ENCODE measurements at regions of chr16 and their contacts with region 1.

Region 1: DNA sequence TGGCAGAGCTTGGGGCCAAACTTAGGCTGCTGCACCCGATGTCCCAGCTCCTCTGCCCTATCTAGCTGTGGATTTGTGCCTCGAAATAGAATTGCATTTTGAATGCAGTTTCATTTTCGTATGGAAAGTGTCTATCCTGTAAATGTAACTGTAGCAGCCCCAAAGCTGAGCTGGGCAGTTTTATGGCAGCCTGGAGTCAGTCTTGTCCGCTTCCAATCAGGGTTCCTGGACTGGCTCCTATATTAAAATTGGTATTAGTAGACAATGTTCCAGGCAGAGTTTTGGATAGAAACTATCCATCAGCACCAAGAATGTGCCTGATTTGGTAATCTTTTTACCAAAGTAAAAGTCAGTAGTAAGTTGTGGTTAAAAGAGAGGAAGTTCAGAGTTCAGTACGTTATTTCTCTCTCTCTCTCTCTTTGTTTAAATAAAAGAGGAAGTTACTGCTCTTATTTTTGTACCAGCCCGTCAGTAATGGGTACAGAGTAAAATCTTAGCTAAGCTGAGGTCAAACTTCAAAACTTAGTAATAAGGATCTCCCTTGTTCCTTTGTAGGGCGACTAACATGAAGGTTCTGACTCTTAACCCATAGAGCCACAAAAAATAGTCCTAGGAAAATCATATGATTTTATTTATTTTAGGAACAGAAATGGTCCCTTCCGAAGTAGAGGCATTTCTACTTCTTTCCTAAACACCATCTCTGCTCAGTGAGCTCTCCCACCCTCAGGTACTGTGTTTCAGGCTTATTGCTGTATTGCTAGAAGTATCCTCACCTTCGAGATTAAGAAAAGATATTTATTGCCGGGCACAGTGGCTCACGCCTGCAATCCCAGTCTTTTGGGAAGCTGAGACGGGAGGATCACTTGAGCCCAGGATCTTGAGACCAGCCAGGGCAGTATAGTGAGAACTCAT is 28.0 kb downstream of the PRKCB start:
- DNase-seq: peak; percentile 82
- ATAC-seq: peak; percentile 80
- H3K4me3 ChIP-seq: peak overlapping the region; percentile 28 to 68 (median 55)
- H3K4me3 Mint-ChIP-seq: peak overlapping the region; percentile 89
- H3K27ac ChIP-seq: peak overlapping the region; percentile 54 to 76
- H3K27ac Mint-ChIP-seq: peak overlapping the region; percentile 92
- H3K4me1 ChIP-seq: peaks cover 92 to 94% of the 10 kb centered on the region in 2 donors
- H3K4me1 Mint-ChIP-seq: peaks cover 93% of the 10 kb centered on the region
- H3K27me3 ChIP-seq: no peaks in the 10 kb centered on the region
- H3K27me3 Mint-ChIP-seq: no peaks in the 10 kb centered on the region
- CTCF ChIP-seq: no peak

Region 2: GRCh38 chr16:23753908-23754593 is 109.7 kb before region 1 on chr16:
- CTCF ChIA-PET with region 1: no interaction called
- POLR2A ChIA-PET with region 1: no interaction called
- intact Hi-C with region 1: no loop called
- DNase-seq: no peak
- ATAC-seq: no peak
- H3K4me3 ChIP-seq: peak overlapping the region in 2 of 5 experiments; percentile 32 to 57
- H3K4me3 Mint-ChIP-seq: peak overlapping the region; percentile 34
- H3K27ac ChIP-seq: no peak overlapping the region
- H3K27ac Mint-ChIP-seq: no peak overlapping the region
- H3K4me1 ChIP-seq: peaks cover 12 to 16% of the 10 kb centered on the region in 2 donors
- H3K4me1 Mint-ChIP-seq: peaks cover 3% of the 10 kb centered on the region
- H3K27me3 ChIP-seq: peaks cover 0 to 56% (median 26%) of the 10 kb centered on the region in 4 experiments
- H3K27me3 Mint-ChIP-seq: peaks cover 58% of the 10 kb centered on the region
- CTCF ChIP-seq: no peak

Region 3: DNA sequence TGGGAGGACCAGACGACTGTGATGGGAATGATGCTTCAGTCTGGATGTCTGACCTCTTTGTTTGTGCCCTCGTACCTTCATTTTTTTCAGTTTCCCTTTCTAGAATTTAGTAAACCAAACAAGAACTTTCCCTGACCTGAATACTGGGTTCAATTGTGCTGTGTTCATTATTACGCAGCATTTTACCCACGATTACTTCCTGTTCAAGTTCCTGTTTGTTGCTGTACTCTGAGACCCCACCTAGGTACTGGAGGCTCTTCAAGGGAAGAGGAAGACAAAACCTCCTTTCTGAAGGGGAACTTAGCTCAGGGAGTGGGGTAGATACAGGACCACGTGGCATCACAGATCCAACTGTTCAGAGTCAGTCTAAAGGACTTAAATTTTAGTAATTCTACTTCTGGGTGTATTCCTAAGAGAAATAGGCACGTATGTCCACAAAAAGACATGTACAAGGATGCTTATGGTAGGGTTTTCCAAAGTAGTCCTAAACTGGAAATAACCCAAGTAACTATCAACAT is 37.2 kb before region 1 on chr16:
- CTCF ChIA-PET with region 1: interaction called, 3 read pairs
- POLR2A ChIA-PET with region 1: no interaction called
- intact Hi-C with region 1: loop called (anchors 1 kb)
- DNase-seq: peak; percentile 84
- ATAC-seq: peak; percentile 91
- H3K4me3 ChIP-seq: peak overlapping the region in 3 of 5 experiments; percentile 10 to 34 (median 16)
- H3K4me3 Mint-ChIP-seq: peak overlapping the region; percentile 77
- H3K27ac ChIP-seq: peak overlapping the region; percentile 38 to 62
- H3K27ac Mint-ChIP-seq: peak overlapping the region; percentile 84
- H3K4me1 ChIP-seq: peaks cover 25 to 26% of the 10 kb centered on the region in 2 donors
- H3K4me1 Mint-ChIP-seq: peaks cover 28% of the 10 kb centered on the region
- H3K27me3 ChIP-seq: no peaks in the 10 kb centered on the region
- H3K27me3 Mint-ChIP-seq: no peaks in the 10 kb centered on the region
- CTCF ChIP-seq: no peak

Region 4: GRCh38 chr16:23835390-23836077 is 28.2 kb before region 1 on chr16 and contains the start of gene PRKCB:
- CTCF ChIA-PET with region 1: interaction called, 5 read pairs
- POLR2A ChIA-PET with region 1: interaction called, 3 read pairs
- intact Hi-C with region 1: loop called (anchors 1 kb)
- DNase-seq: peak; percentile 93
- ATAC-seq: peak; percentile 83
- H3K4me3 ChIP-seq: peak within 1 kb of the TSS; percentile 78 to 98 (median 88)
- H3K4me3 Mint-ChIP-seq: peak within 1 kb of the TSS; percentile 99
- H3K27ac ChIP-seq: peak within 1 kb of the TSS; percentile 7 to 56
- H3K27ac Mint-ChIP-seq: peak within 1 kb of the TSS; percentile 96
- H3K4me1 ChIP-seq: peaks cover 34 to 37% of the 10 kb centered on the region in 2 donors
- H3K4me1 Mint-ChIP-seq: peaks cover 48% of the 10 kb centered on the region
- H3K27me3 ChIP-seq: no peaks in the 10 kb centered on the region
- H3K27me3 Mint-ChIP-seq: no peaks in the 10 kb centered on the region
- CTCF ChIP-seq: no peak
- total RNA-seq, gene PRKCB: 373 and 397 TPM in 2 replicates

Region 5: GRCh38 chr16:23842137-23842600 is 21.6 kb before region 1 on chr16:
- CTCF ChIA-PET with region 1: interaction called, 5 read pairs
- POLR2A ChIA-PET with region 1: interaction called, 4 read pairs
- intact Hi-C with region 1: loop called (anchors 1 kb)
- DNase-seq: no peak
- ATAC-seq: no peak
- H3K4me3 ChIP-seq: no peak overlapping the region
- H3K4me3 Mint-ChIP-seq: peak overlapping the region; percentile 42
- H3K27ac ChIP-seq: peak overlapping the region; percentile 20 to 67
- H3K27ac Mint-ChIP-seq: peak overlapping the region; percentile 85
- H3K4me1 ChIP-seq: peaks cover 71 to 75% of the 10 kb centered on the region in 2 donors
- H3K4me1 Mint-ChIP-seq: peaks cover 79% of the 10 kb centered on the region
- H3K27me3 ChIP-seq: no peaks in the 10 kb centered on the region
- H3K27me3 Mint-ChIP-seq: no peaks in the 10 kb centered on the region
- CTCF ChIP-seq: no peak

Region 6: GRCh38 chr16:23959072-23959751 is 95.4 kb after region 1 on chr16:
- CTCF ChIA-PET with region 1: interaction called, 10 read pairs
- POLR2A ChIA-PET with region 1: no interaction called
- intact Hi-C with region 1: no loop called
- DNase-seq: no peak
- ATAC-seq: peak; percentile 55
- H3K4me3 ChIP-seq: peak overlapping the region in 1 of 5 experiments; percentile 49
- H3K4me3 Mint-ChIP-seq: peak overlapping the region; percentile 59
- H3K27ac ChIP-seq: peak overlapping the region; percentile 79 to 88
- H3K27ac Mint-ChIP-seq: peak overlapping the region; percentile 87
- H3K4me1 ChIP-seq: peaks cover 81 to 84% of the 10 kb centered on the region in 2 donors
- H3K4me1 Mint-ChIP-seq: peaks cover 87% of the 10 kb centered on the region
- H3K27me3 ChIP-seq: no peaks in the 10 kb centered on the region
- H3K27me3 Mint-ChIP-seq: no peaks in the 10 kb centered on the region
- CTCF ChIP-seq: no peak